ENCODE measurements at regions of chr19 and their contacts with region 1.

Region 1: GRCh38 chr19:52224211-52224610 is 34.4 kb downstream of the PPP2R1A start:
- DNase-seq: no peak
- H3K4me3 ChIP-seq: no peak overlapping the region
- H3K27ac ChIP-seq: no peak overlapping the region
- H3K4me1 ChIP-seq: no peaks in the 10 kb centered on the region
- H3K27me3 ChIP-seq: no peaks in the 10 kb centered on the region
- CTCF ChIP-seq: no peak
- EP300 ChIP-seq: no peak
- POLR2A ChIP-seq: no peak

Region 2: GRCh38 chr19:51944798-51945552 is 279.2 kb before region 1 on chr19:
- in situ Hi-C with region 1: no loop called
- intact Hi-C with region 1: no loop called
- DNase-seq: no peak
- H3K4me3 ChIP-seq: no peak overlapping the region
- H3K27ac ChIP-seq: no peak overlapping the region
- H3K4me1 ChIP-seq: no peaks in the 10 kb centered on the region
- H3K27me3 ChIP-seq: no peaks in the 10 kb centered on the region
- CTCF ChIP-seq: no peak
- EP300 ChIP-seq: no peak
- POLR2A ChIP-seq: no peak

Region 3: DNA sequence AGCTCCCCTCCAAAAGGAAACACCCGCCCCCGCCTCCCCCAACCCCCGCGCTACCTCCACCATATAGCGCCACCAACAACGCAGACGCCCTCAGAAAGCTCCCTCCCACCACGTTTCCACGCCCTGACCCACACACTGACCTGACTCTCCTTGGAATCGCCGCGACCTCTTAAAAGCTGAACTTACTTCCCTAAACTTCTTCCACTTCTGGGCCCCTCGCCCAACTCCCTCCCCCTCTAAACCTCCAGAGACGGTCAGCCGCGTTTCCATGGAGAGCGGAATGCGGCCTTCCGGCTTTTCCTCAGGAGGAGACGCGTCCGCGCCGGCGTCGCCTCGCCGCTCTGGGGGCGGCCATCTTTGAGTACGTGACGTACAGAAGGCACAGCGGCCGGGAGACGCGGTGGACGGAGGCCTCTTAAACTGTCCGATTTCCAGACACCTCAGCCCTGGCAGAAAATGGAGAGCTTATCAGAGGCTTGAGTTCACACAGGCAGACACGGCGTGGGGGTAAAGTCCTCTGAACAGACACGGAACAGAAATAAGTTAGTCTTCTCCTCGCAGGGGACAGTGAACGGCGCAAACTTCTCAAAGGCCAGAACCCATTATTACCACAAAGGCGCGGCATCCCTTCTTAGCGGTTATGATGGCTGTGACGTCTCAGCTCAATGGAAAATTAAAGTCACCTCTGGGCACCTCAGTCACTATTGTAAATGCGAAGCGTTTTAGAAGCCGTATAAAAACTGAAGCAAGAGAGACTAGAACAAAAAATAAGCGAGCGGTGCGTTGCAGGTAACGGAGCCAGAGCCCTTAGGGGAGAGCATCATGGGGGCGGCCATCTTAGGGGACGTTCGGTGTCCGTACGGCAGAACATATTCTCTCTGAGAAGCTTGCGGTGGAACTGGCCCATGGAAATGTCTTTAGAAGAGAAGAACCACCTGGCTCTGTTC is 175.4 kb before region 1 on chr19 and contains the start of gene ZNF432:
- in situ Hi-C with region 1: no loop called
- intact Hi-C with region 1: no loop called
- DNase-seq: peak; percentile 90
- H3K4me3 ChIP-seq: peak within 1 kb of the TSS; percentile 39 to 68 (median 48)
- H3K27ac ChIP-seq: peak within 1 kb of the TSS; percentile 84 to 94 (median 92)
- H3K4me1 ChIP-seq: peaks cover 0 to 5% (median 2%) of the 10 kb centered on the region in 4 donors
- H3K27me3 ChIP-seq: no peaks in the 10 kb centered on the region
- CTCF ChIP-seq: no peak
- EP300 ChIP-seq: no peak
- POLR2A ChIP-seq: peak; percentile 62
- total RNA-seq, gene ZNF432: 8.0 to 16.1 (median 10.1) TPM

Region 4: GRCh38 chr19:52248241-52248640 is 24.0 kb after region 1 on chr19:
- in situ Hi-C with region 1: no loop called
- intact Hi-C with region 1: loop called (anchors 1 kb)
- DNase-seq: peak; percentile 66
- H3K4me3 ChIP-seq: no peak overlapping the region
- H3K27ac ChIP-seq: no peak overlapping the region
- H3K4me1 ChIP-seq: no peaks in the 10 kb centered on the region
- H3K27me3 ChIP-seq: no peaks in the 10 kb centered on the region
- CTCF ChIP-seq: peak; percentile 43 to 54 (median 49)
- EP300 ChIP-seq: no peak
- POLR2A ChIP-seq: no peak